ENCODE measurements at regions of chr10 and their contacts with region 1.

Region 1: GRCh38 chr10:35336084-35336831 is at the start of gene CCNY:
- DNase-seq: peak; percentile 86
- H3K4me3 ChIP-seq: peak within 1 kb of the TSS; percentile 99
- H3K4me3 Mint-ChIP-seq: peak within 1 kb of the TSS; percentile 97
- H3K27ac Mint-ChIP-seq: peak within 1 kb of the TSS; percentile 98
- H3K4me1 ChIP-seq: peaks cover 55% of the 10 kb centered on the region
- H3K4me1 Mint-ChIP-seq: peaks cover 65% of the 10 kb centered on the region
- H3K27me3 ChIP-seq: no peaks in the 10 kb centered on the region
- H3K27me3 Mint-ChIP-seq: no peaks in the 10 kb centered on the region
- CTCF ChIP-seq: no peak
- total RNA-seq, gene CCNY: 111 and 122 TPM in 2 replicates

Region 2: DNA sequence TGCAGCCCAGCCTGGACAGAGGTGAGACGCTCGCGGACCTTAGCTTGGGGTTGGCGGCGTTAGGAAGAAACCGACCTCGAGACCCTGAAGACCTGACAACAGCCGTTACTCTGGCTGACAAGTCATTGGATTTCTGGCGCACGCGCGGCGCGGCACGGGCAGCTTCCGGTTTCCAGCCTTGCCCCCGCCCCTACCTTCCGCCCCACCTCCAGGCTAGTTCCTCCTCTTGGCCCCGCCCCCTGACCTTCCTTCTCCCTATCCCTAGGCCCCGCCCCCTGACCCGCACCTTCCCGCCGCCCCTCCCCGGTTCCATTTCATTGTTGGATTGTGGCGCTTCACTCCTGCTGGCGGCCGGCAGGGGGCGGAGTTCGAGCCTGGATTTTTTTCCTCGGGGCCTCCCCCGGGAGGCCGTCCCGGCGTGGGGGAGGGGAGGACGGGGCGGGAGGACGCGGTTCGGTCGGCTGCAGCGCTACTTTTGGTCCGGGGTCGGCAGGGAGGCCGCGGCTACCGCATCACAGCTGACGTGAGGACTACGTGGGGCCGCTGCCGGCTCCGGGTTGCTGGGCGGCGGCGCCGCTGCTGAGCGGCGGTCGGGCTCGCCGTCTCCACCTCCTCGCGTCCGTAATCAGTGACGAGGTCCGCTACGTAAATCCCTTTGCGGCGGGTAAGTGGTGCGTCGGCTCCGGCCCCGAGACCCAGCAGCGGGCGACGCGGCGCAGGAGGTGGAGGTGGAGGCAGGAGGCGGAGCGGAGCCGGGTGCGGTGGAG is 209.5 kb before region 1 on chr10 and contains the start of gene CREM:
- CTCF ChIA-PET with region 1: no interaction called
- POLR2A ChIA-PET with region 1: no interaction called
- intact Hi-C with region 1: loop called (anchors 1 kb)
- DNase-seq: peak; percentile 100
- H3K4me3 ChIP-seq: peak within 1 kb of the TSS; percentile 87
- H3K4me3 Mint-ChIP-seq: peak within 1 kb of the TSS; percentile 93
- H3K27ac Mint-ChIP-seq: peak within 1 kb of the TSS; percentile 97
- H3K4me1 ChIP-seq: peaks cover 9% of the 10 kb centered on the region
- H3K4me1 Mint-ChIP-seq: no peaks in the 10 kb centered on the region
- H3K27me3 ChIP-seq: no peaks in the 10 kb centered on the region
- H3K27me3 Mint-ChIP-seq: no peaks in the 10 kb centered on the region
- CTCF ChIP-seq: peak; percentile 96 to 99
- total RNA-seq, gene CREM: 24.7 and 26.1 TPM in 2 replicates

Region 3: GRCh38 chr10:35236739-35237138 is 99.5 kb before region 1 on chr10:
- CTCF ChIA-PET with region 1: no interaction called
- POLR2A ChIA-PET with region 1: no interaction called
- intact Hi-C with region 1: loop called (anchors 2 kb)
- DNase-seq: peak in 1 of 2 experiments; percentile 50
- H3K4me3 ChIP-seq: no peak overlapping the region
- H3K4me3 Mint-ChIP-seq: no peak overlapping the region
- H3K27ac Mint-ChIP-seq: no peak overlapping the region
- H3K4me1 ChIP-seq: no peaks in the 10 kb centered on the region
- H3K4me1 Mint-ChIP-seq: peaks cover 4% of the 10 kb centered on the region
- H3K27me3 ChIP-seq: no peaks in the 10 kb centered on the region
- H3K27me3 Mint-ChIP-seq: no peaks in the 10 kb centered on the region
- CTCF ChIP-seq: peak; percentile 54 to 68

Region 4: GRCh38 chr10:35251373-35252100 is 84.7 kb before region 1 on chr10:
- CTCF ChIA-PET with region 1: no interaction called
- POLR2A ChIA-PET with region 1: no interaction called
- intact Hi-C with region 1: no loop called
- DNase-seq: no peak
- H3K4me3 ChIP-seq: no peak overlapping the region
- H3K4me3 Mint-ChIP-seq: no peak overlapping the region
- H3K27ac Mint-ChIP-seq: no peak overlapping the region
- H3K4me1 ChIP-seq: no peaks in the 10 kb centered on the region
- H3K4me1 Mint-ChIP-seq: no peaks in the 10 kb centered on the region
- H3K27me3 ChIP-seq: no peaks in the 10 kb centered on the region
- H3K27me3 Mint-ChIP-seq: no peaks in the 10 kb centered on the region
- CTCF ChIP-seq: no peak

Region 5: GRCh38 chr10:35364808-35365207 is 28.6 kb after region 1 on chr10:
- CTCF ChIA-PET with region 1: no interaction called
- POLR2A ChIA-PET with region 1: interaction called, 4 read pairs
- intact Hi-C with region 1: loop called (anchors 2 kb)
- DNase-seq: peak in 1 of 2 experiments; percentile 75
- H3K4me3 ChIP-seq: no peak overlapping the region
- H3K4me3 Mint-ChIP-seq: peak overlapping the region; percentile 62
- H3K27ac Mint-ChIP-seq: peak overlapping the region; percentile 78
- H3K4me1 ChIP-seq: peaks cover 67% of the 10 kb centered on the region
- H3K4me1 Mint-ChIP-seq: peaks cover 45% of the 10 kb centered on the region
- H3K27me3 ChIP-seq: no peaks in the 10 kb centered on the region
- H3K27me3 Mint-ChIP-seq: no peaks in the 10 kb centered on the region
- CTCF ChIP-seq: no peak

Region 6: GRCh38 chr10:35458500-35459448 is 122.5 kb after region 1 on chr10:
- CTCF ChIA-PET with region 1: no interaction called
- POLR2A ChIA-PET with region 1: no interaction called
- intact Hi-C with region 1: loop called (anchors 5 kb)
- DNase-seq: no peak
- H3K4me3 ChIP-seq: no peak overlapping the region
- H3K4me3 Mint-ChIP-seq: no peak overlapping the region
- H3K27ac Mint-ChIP-seq: peak overlapping the region; percentile 12
- H3K4me1 ChIP-seq: no peaks in the 10 kb centered on the region
- H3K4me1 Mint-ChIP-seq: peaks cover 14% of the 10 kb centered on the region
- H3K27me3 ChIP-seq: no peaks in the 10 kb centered on the region
- H3K27me3 Mint-ChIP-seq: no peaks in the 10 kb centered on the region
- CTCF ChIP-seq: no peak

Region 7: DNA sequence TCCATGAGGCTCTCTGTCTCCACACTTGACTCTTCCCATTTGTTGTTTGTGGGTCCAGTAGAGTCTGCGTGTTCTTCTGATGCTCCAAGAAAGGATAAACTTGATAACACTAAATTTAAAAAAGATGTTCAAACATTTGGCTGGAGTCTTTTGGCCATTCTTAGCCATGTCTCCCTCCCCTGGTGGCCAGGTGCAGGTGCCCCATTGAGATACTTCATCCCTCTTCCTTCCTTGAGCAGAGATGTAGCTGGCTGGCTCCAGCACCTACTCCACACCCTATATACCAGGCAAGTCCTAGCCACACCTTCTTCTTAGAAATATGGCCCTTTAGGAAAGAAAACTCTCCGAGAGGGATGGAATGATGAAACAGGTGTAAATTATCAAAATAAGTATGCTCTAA is 165.7 kb after region 1 on chr10:
- CTCF ChIA-PET with region 1: no interaction called
- POLR2A ChIA-PET with region 1: interaction called, 8 read pairs
- intact Hi-C with region 1: loop called (anchors 5 kb)
- DNase-seq: peak in 1 of 2 experiments; percentile 21
- H3K4me3 ChIP-seq: no peak overlapping the region
- H3K4me3 Mint-ChIP-seq: no peak overlapping the region
- H3K27ac Mint-ChIP-seq: no peak overlapping the region
- H3K4me1 ChIP-seq: peaks cover 13% of the 10 kb centered on the region
- H3K4me1 Mint-ChIP-seq: peaks cover 37% of the 10 kb centered on the region
- H3K27me3 ChIP-seq: no peaks in the 10 kb centered on the region
- H3K27me3 Mint-ChIP-seq: no peaks in the 10 kb centered on the region
- CTCF ChIP-seq: peak; percentile 26 to 45

Measured in Caco-2 (cell line).